ENCODE measurements at regions of chr17 and their contacts with region 1.

Region 1: DNA sequence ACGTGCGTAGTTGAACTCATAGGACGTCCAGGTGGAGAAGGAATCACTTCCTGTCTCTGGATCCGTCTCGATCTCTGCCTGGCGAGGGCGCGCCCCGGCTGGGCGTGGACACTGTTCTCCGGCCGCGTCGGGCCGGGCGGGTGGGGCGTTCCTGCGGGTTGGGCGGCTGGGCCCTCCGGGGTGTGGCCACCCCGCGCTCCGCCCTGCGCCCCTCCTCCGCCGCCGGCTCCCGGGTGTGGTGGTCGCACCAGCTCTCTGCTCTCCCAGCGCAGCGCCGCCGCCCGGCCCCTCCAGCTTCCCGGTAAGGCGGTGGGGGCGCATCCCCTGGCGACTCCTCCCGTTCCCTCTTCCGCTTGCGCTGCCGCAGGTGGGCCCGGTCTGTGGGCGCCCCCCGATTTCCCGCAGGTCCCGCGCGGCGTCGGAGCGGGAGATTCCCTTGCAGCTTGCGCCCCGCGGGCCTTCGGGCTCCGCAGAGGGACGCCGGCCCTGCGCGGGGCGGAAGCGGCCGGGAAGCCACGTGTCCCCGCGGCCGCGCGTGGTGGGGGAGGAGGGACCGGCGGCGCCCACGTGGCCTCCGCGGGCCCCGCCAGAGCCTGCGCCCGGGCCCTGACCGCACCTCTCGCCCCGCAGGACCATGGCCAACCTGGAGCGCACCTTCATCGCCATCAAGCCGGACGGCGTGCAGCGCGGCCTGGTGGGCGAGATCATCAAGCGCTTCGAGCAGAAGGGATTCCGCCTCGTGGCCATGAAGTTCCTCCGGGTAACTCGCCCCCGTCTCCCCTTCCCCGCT is at the start of gene NME2:
- DNase-seq: peak; percentile 97
- H3K4me3 ChIP-seq: peak within 1 kb of the TSS; percentile 71 to 93 (median 82)
- H3K27ac ChIP-seq: peak within 1 kb of the TSS; percentile 89 to 96 (median 94)
- H3K4me1 ChIP-seq: peaks cover 10 to 34% (median 25%) of the 10 kb centered on the region in 4 donors
- H3K27me3 ChIP-seq: no peaks in the 10 kb centered on the region
- CTCF ChIP-seq: no peak
- EP300 ChIP-seq: no peak
- POLR2A ChIP-seq: peak; percentile 48
- total RNA-seq, gene NME2: 245 to 554 (median 350) TPM

Region 2: DNA sequence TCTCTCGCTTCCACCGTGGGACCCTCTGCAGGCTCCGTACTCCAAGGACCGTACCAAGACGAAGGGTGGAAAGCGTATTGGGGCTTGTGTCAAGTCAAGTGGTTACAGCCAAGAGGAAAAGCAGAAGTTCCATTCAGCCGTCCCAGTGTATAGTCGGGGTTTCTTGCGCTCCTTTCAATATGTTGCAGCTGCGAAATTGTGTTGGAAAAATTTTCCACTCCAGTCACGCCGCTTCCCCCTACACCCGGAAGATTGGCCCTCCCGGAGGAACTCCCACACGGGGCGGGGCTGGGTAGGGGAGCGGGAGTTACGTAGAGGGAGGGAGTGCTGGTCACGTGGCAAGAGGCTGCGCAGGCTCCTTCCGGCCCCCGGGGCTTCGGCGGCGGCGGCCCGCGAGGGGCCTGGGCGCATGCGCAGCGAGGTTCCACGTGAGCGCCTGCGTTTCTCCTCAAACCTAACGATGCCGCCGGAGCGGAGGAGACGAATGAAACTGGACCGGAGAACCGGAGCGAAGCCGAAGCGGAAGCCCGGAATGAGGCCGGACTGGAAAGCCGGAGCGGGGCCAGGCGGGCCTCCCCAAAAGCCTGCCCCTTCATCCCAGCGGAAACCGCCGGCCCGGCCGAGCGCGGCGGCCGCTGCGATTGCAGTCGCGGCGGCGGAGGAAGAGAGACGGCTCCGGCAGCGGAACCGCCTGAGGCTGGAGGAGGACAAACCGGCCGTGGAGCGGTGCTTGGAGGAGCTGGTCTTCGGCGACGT is 93.9 kb after region 1 on chr17 and contains the start of gene UTP18:
- intact Hi-C with region 1: loop called (anchors 5 kb)
- DNase-seq: peak; percentile 99
- H3K4me3 ChIP-seq: peak within 1 kb of the TSS; percentile 91 to 98 (median 93)
- H3K27ac ChIP-seq: peak within 1 kb of the TSS; percentile 93 to 99 (median 98)
- H3K4me1 ChIP-seq: peaks cover 39 to 69% (median 64%) of the 10 kb centered on the region in 4 donors
- H3K27me3 ChIP-seq: no peaks in the 10 kb centered on the region
- CTCF ChIP-seq: peak in 1 of 3 experiments; percentile 23
- EP300 ChIP-seq: no peak
- POLR2A ChIP-seq: peak; percentile 39
- total RNA-seq, gene UTP18: 17.9 to 29.3 (median 21.1) TPM

Measured in esophagus muscularis mucosa (tissue), 4 donors.